Activated naive CD4-positive, alpha-beta T cell treated with anti-CD3 and anti-CD28 coated beads for 36 hours (primary cell): ENCODE measurements at regions of chr3 and their contacts with region 1.

Region 1: GRCh38 chr3:139677388-139678155 is at the start of gene NMNAT3:
- DNase-seq: peak; percentile 87
- H3K4me3 Mint-ChIP-seq: peak within 1 kb of the TSS; percentile 79
- H3K27ac Mint-ChIP-seq: peak within 1 kb of the TSS; percentile 29
- H3K4me1 Mint-ChIP-seq: peaks cover 10% of the 10 kb centered on the region
- H3K27me3 Mint-ChIP-seq: no peaks in the 10 kb centered on the region
- total RNA-seq, gene NMNAT3: 6.2 to 7.6 TPM

Region 2: GRCh38 chr3:139343895-139344856 is 333.4 kb before region 1 on chr3 and contains the start of gene MRPS22:
- CTCF ChIA-PET with region 1: no interaction called
- intact Hi-C with region 1: loop called (anchors 5 kb)
- DNase-seq: peak; percentile 89
- H3K4me3 Mint-ChIP-seq: no peak within 1 kb of the TSS
- H3K27ac Mint-ChIP-seq: no peak within 1 kb of the TSS
- H3K4me1 Mint-ChIP-seq: peaks cover 9% of the 10 kb centered on the region
- H3K27me3 Mint-ChIP-seq: peaks cover 3% of the 10 kb centered on the region
- total RNA-seq, gene MRPS22: 66.8 to 69.1 TPM

Region 3: DNA sequence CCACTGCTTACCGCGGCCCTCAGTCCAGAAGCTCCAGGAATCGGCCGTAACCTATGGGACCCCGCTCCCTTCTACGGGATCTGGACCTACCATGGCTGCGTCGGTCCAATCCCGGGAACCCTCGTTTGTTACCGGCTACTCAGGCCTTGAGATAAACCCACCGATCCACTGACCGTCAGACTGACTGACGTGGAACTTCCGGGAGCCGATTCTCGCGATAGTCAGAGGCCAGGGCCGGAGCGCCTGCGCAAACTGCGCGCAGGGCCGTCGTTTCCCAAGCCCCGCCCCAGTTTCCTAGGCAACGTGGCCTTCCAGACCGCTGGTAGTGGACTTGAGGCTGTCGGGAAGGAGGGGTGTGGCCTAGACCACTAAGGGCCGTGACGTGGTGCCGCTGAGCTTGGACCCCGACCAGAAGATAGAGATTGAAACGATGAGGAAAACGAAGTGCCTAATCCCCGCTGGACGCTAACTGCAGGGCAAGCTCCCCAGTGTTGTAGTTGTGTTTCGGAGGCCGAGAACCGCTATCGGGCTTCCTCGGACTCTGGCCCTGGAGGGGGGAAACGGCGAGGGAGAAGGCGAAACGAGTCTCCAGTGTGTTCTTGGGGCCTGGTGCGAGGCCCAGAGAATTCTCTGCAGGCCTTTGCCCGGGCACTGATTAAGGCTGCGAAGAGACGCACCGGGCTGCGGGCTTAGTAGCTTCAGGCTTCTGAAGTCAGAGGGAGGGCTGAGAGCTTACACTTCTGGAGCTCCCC is 287.9 kb before region 1 on chr3 and contains the start of gene COPB2:
- CTCF ChIA-PET with region 1: no interaction called
- intact Hi-C with region 1: loop called (anchors 1 kb)
- DNase-seq: peak; percentile 97
- H3K4me3 Mint-ChIP-seq: peak within 1 kb of the TSS; percentile 95
- H3K27ac Mint-ChIP-seq: peak within 1 kb of the TSS; percentile 86
- H3K4me1 Mint-ChIP-seq: peaks cover 32% of the 10 kb centered on the region
- H3K27me3 Mint-ChIP-seq: no peaks in the 10 kb centered on the region
- total RNA-seq, gene COPB2: 83.8 to 89.2 TPM

Region 4: GRCh38 chr3:140941434-140942220 is 1264.1 kb after region 1 on chr3 and contains the start of gene SLC25A36:
- CTCF ChIA-PET with region 1: no interaction called
- intact Hi-C with region 1: loop called (anchors 10 kb)
- DNase-seq: peak; percentile 99
- H3K4me3 Mint-ChIP-seq: peak within 1 kb of the TSS; percentile 89
- H3K27ac Mint-ChIP-seq: peak within 1 kb of the TSS; percentile 88
- H3K4me1 Mint-ChIP-seq: peaks cover 35% of the 10 kb centered on the region
- H3K27me3 Mint-ChIP-seq: no peaks in the 10 kb centered on the region
- total RNA-seq, gene SLC25A36: 48.7 to 50.1 TPM